ENCODE measurements at regions of chr3 and their contacts with region 1.

Region 1: GRCh38 chr3:12752809-12753208 is 6.2 kb downstream of the TMEM40 start:
- DNase-seq: no peak
- H3K4me3 Mint-ChIP-seq: no peak overlapping the region
- H3K27ac Mint-ChIP-seq: no peak overlapping the region
- H3K4me1 Mint-ChIP-seq: peaks cover 29% of the 10 kb centered on the region
- H3K27me3 Mint-ChIP-seq: no peaks in the 10 kb centered on the region
- CTCF ChIP-seq: no peak

Region 2: GRCh38 chr3:12545300-12545791 is 207.5 kb before region 1 on chr3 and contains the start of gene MKRN2OS:
- CTCF ChIA-PET with region 1: no interaction called
- intact Hi-C with region 1: no loop called
- DNase-seq: peak; percentile 78
- H3K4me3 Mint-ChIP-seq: peak within 1 kb of the TSS; percentile 60
- H3K27ac Mint-ChIP-seq: peak within 1 kb of the TSS; percentile 75
- H3K4me1 Mint-ChIP-seq: no peaks in the 10 kb centered on the region
- H3K27me3 Mint-ChIP-seq: no peaks in the 10 kb centered on the region
- CTCF ChIP-seq: no peak
- total RNA-seq, gene MKRN2OS: 2.1 and 3.9 TPM in 2 replicates

Region 3: DNA sequence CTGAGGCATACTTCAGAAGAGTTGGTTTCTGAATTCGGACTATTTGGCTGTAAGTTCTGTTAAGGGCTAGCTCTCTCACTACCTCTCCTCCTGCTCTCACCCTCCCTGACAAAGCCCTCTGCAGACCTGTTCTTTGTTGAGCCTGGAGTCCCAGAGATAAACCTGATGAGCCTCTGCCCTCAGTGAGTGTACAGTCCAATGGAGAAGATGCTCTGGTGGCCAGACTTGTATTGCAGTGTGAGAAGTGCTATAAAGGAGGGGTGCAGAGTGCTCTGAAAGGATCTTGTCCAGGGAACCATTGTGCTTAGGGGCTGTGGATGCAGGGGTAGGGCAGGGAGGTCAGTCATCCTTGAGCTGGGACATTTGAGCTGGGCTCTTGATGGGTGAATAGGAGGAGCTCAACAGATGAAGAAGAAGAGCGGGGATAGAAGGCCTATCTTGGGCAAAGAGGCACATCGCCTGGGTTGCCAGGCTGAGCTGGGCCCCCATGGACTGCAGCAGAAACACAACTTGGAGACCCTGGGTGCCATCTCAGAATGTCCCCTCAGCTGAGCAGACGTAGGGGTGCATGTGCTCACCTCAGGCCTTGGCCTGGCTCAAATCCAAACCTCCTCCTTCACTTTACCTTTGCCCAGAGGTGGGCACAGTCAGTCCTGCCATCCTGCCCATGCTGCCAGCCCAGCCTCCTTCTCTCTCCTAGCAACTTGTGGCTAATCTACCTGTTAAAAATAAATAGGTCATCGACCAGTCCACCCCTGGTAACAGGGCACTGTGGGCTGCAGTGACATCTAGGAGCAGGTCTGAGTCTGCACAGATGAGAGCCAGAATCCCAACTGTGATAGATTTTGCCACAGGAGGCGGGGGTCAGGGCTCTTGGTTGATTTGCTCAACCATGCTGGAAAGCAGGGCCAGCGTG is 47.0 kb after region 1 on chr3:
- CTCF ChIA-PET with region 1: interaction called, 6 read pairs
- intact Hi-C with region 1: loop called (anchors 2 kb)
- DNase-seq: no peak
- H3K4me3 Mint-ChIP-seq: no peak overlapping the region
- H3K27ac Mint-ChIP-seq: no peak overlapping the region
- H3K4me1 Mint-ChIP-seq: no peaks in the 10 kb centered on the region
- H3K27me3 Mint-ChIP-seq: peaks cover 35% of the 10 kb centered on the region
- CTCF ChIP-seq: no peak

Measured in Calu3 (cell line).